ENCODE measurements at regions of chr5 and their contacts with region 1.

Region 1: DNA sequence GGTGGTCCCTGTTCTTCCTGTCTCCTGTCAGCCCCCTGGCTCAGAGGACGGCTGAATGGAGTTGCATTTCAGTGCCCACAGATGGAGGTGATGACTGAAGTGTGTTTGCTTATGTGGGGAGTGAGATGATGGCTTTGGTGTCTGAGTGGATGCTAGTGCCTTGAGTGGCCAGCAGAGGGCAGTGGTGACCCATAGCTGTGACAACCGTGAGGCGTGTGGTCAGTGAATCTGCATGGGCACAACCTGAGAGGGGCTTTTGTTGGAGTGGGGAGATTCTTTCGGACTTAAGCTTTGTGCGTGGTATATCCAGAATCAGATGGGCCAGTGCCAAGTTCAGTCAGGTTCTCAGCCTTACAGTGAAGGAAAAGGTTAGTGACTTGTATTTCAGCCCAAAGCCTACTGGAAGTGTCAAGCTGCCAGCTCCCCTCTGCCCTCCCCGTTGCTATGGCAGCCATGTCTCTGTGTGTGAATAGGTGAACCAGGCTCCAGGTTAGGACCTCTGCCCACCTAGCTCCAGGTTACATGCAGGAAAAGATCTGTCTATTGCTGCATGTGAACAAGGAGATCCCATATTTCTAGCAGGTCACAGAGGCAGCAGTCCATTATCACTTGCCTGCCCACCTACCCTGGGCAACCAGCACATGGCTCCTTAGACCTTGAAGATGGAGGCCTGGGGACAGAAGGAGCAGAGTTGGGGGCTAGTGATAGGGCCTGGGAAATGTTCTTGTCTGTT is 14.7 kb upstream of the CXXC5 start:
- DNase-seq: peak; percentile 89
- H3K4me3 Mint-ChIP-seq: no peak overlapping the region
- H3K27ac Mint-ChIP-seq: peak overlapping the region; percentile 1
- H3K4me1 Mint-ChIP-seq: peaks cover 33% of the 10 kb centered on the region
- H3K27me3 Mint-ChIP-seq: no peaks in the 10 kb centered on the region

Region 2: GRCh38 chr5:139415221-139415861 is 218.1 kb before region 1 on chr5:
- intact Hi-C with region 1: loop called (anchors 2 kb)
- DNase-seq: peak; percentile 81
- H3K4me3 Mint-ChIP-seq: peak overlapping the region; percentile 64
- H3K27ac Mint-ChIP-seq: peak overlapping the region; percentile 95
- H3K4me1 Mint-ChIP-seq: peaks cover 60% of the 10 kb centered on the region
- H3K27me3 Mint-ChIP-seq: no peaks in the 10 kb centered on the region

Region 3: GRCh38 chr5:139648205-139649081 is 15.0 kb after region 1 on chr5 and contains the start of gene CXXC5:
- intact Hi-C with region 1: loop called (anchors 1 kb)
- DNase-seq: peak; percentile 84
- H3K4me3 Mint-ChIP-seq: peak within 1 kb of the TSS; percentile 82
- H3K27ac Mint-ChIP-seq: no peak within 1 kb of the TSS
- H3K4me1 Mint-ChIP-seq: peaks cover 33% of the 10 kb centered on the region
- H3K27me3 Mint-ChIP-seq: peaks cover 59% of the 10 kb centered on the region
- total RNA-seq, gene CXXC5: 1.2 and 1.9 TPM in 2 replicates

Region 4: GRCh38 chr5:139690064-139690802 is 56.8 kb after region 1 on chr5:
- intact Hi-C with region 1: loop called (anchors 1 kb)
- DNase-seq: peak; percentile 76
- H3K4me3 Mint-ChIP-seq: no peak overlapping the region
- H3K27ac Mint-ChIP-seq: no peak overlapping the region
- H3K4me1 Mint-ChIP-seq: peaks cover 2% of the 10 kb centered on the region
- H3K27me3 Mint-ChIP-seq: peaks cover 7% of the 10 kb centered on the region

Region 5: GRCh38 chr5:139745800-139746690 is 112.6 kb after region 1 on chr5:
- intact Hi-C with region 1: loop called (anchors 5 kb)
- DNase-seq: peak; percentile 76
- H3K4me3 Mint-ChIP-seq: peak overlapping the region; percentile 82
- H3K27ac Mint-ChIP-seq: no peak overlapping the region
- H3K4me1 Mint-ChIP-seq: peaks cover 29% of the 10 kb centered on the region
- H3K27me3 Mint-ChIP-seq: peaks cover 39% of the 10 kb centered on the region